Heart right ventricle (tissue), 16 donors: ENCODE measurements at regions of chr20 and their contacts with region 1.

Region 1: DNA sequence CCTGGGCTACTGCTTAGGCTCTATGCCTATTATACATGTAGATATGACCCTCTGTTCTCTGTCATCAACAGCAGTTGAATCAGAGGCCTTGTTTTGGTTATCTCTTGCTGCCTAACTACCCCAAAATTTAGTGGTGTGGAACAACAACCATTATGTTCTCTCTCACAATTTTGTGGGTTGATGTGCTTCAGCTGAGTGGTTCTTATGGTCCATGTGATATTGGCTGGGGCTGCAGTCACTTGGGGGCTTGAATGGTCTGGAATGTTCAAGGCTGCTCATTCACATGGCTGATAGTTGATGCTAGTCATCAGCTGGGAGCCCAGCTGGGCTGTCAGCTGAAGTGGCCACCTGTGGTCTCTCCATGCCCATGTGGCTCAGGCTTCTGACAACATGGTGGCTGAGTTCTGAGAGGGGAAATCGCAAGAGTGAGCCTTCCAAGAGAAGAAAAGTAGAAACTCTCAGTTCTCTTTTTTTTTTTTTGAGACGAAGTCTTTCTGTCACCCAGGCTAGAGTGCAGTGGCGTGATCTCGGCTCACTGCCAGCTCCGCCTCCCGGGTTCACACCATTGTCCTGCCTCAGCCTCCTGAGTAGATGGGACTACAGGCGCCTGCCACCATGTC is 47.8 kb downstream of the SHLD1 start:
- DNase-seq: peak in 1 of 2 donors; percentile 28
- ATAC-seq: peak in 1 of 8 donors; percentile 29
- H3K4me3 ChIP-seq: no peak overlapping the region
- H3K27ac ChIP-seq: no peak overlapping the region
- H3K4me1 ChIP-seq: no peaks in the 10 kb centered on the region
- H3K27me3 ChIP-seq: no peaks in the 10 kb centered on the region
- CTCF ChIP-seq: no peak

Region 2: GRCh38 chr20:5548902-5549599 is 248.9 kb before region 1 on chr20:
- intact Hi-C with region 1: loop called in 2 of 10 experiments (anchors 10 kb)
- DNase-seq: no peak
- ATAC-seq: no peak
- H3K4me3 ChIP-seq: no peak overlapping the region
- H3K27ac ChIP-seq: no peak overlapping the region
- H3K4me1 ChIP-seq: peaks cover 0 to 6% (median 0%) of the 10 kb centered on the region in 9 donors
- H3K27me3 ChIP-seq: no peaks in the 10 kb centered on the region
- CTCF ChIP-seq: no peak

Region 3: GRCh38 chr20:5557123-5557522 is 240.8 kb before region 1 on chr20:
- intact Hi-C with region 1: loop called in 1 of 10 experiments (anchors 10 kb)
- DNase-seq: peak; percentile 23 to 41
- ATAC-seq: peak in 6 of 8 donors; percentile 56 to 78 (median 68)
- H3K4me3 ChIP-seq: no peak overlapping the region
- H3K27ac ChIP-seq: no peak overlapping the region
- H3K4me1 ChIP-seq: no peaks in the 10 kb centered on the region
- H3K27me3 ChIP-seq: no peaks in the 10 kb centered on the region
- CTCF ChIP-seq: peak in 8 of 9 donors; percentile 12 to 67 (median 59)